B cell (primary cell): ENCODE measurements at regions of chr22 and their contacts with region 1.

Region 1: DNA sequence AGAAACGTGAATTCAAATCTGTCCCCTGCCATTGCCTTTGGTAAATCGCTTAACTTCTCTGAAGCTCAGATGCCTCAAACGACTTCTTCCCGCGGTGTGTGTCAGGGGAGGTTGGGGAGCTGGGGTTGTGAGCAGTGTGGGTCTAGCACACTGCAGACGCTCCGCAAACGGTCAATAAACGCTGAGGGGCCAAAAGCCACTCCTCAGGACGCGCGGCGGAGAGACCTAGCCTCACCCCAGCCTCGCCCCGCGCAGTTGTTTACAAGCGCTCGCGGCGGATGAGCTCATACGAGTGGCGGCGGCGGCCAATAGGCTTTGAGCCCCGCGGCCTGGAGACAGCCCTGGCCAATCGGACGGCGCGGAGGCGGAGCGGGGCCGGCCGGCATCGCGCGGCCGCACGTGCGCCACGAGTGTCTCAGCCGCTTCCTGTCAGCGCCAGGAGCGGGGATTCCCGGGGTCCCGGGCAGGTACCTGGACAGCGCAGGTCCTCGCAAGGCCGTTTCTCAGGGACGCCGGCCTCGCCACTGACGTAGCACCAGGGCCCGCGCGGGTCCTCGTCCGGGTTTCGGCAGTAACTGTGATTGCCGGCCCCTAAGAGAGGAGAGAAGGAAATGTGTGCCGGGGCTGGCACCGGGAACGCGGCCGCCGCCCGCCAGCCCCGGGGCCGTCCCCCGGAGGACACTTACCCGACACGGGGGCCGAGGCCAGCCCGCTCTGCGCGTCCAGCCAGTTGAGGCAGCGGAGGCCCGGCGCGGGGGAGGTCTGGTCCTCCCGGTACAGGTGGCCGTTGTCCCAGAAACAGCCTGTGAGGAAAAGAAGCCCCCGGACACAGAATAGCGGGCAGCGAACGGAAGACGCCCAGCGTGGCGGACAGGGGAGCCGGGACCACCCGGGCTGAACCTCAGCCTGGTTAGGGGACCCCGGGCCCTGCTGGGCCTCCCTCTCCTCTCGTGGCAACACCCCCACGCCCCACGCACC is 1.5 kb downstream of the PIK3IP1 start:
- DNase-seq: peak; percentile 97
- ATAC-seq: peak; percentile 88
- H3K4me3 ChIP-seq: peak overlapping the region; percentile 72 to 99 (median 95)
- H3K4me3 Mint-ChIP-seq: peak overlapping the region; percentile 97
- H3K27ac ChIP-seq: peak overlapping the region; percentile 99 to 100
- H3K27ac Mint-ChIP-seq: peak overlapping the region; percentile 100
- H3K4me1 ChIP-seq: peaks cover 68 to 76% of the 10 kb centered on the region in 2 donors
- H3K4me1 Mint-ChIP-seq: peaks cover 67% of the 10 kb centered on the region
- H3K27me3 ChIP-seq: no peaks in the 10 kb centered on the region
- H3K27me3 Mint-ChIP-seq: no peaks in the 10 kb centered on the region
- CTCF ChIP-seq: no peak

Region 2: GRCh38 chr22:30968924-30969539 is 321.8 kb before region 1 on chr22 and contains the start of gene TUG1:
- CTCF ChIA-PET with region 1: no interaction called
- POLR2A ChIA-PET with region 1: interaction called, 9 read pairs
- intact Hi-C with region 1: loop called (anchors 1 kb)
- DNase-seq: peak; percentile 99
- ATAC-seq: peak; percentile 91
- H3K4me3 ChIP-seq: peak within 1 kb of the TSS; percentile 74 to 88 (median 82)
- H3K4me3 Mint-ChIP-seq: peak within 1 kb of the TSS; percentile 98
- H3K27ac ChIP-seq: peak within 1 kb of the TSS; percentile 90 to 94
- H3K27ac Mint-ChIP-seq: peak within 1 kb of the TSS; percentile 99
- H3K4me1 ChIP-seq: peaks cover 19 to 20% of the 10 kb centered on the region in 2 donors
- H3K4me1 Mint-ChIP-seq: peaks cover 60% of the 10 kb centered on the region
- H3K27me3 ChIP-seq: no peaks in the 10 kb centered on the region
- H3K27me3 Mint-ChIP-seq: no peaks in the 10 kb centered on the region
- CTCF ChIP-seq: no peak
- total RNA-seq, gene TUG1: 110 and 119 TPM in 2 replicates

Region 3: DNA sequence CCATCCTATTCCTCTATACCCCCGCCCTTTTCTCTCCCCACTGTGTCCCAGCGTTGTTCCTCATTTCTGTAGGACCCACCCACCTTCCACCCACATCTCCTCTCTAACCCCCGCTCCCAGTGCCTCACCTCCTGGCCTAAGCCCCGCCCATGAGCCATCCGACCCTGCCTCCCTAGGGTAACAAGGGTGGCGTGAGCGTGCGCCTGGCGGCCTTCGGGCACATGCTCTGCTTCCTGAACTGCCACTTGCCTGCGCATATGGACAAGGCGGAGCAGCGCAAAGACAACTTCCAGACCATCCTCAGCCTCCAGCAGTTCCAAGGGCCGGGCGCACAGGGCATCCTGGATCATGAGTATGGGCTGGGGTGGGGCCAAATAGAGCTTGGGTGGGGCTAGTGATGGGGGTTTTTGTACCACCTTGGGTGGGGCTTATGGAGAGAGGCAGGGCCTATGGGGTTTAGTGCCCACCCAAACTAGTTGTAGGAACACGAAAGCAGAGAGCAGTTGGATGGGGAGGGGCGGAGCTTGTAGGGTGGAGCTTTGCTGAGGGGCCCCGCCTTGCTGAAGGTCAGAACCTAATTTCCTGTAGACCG is 163.5 kb before region 1 on chr22:
- CTCF ChIA-PET with region 1: no interaction called
- POLR2A ChIA-PET with region 1: no interaction called
- intact Hi-C with region 1: no loop called
- DNase-seq: no peak
- ATAC-seq: no peak
- H3K4me3 ChIP-seq: no peak overlapping the region
- H3K4me3 Mint-ChIP-seq: no peak overlapping the region
- H3K27ac ChIP-seq: no peak overlapping the region
- H3K27ac Mint-ChIP-seq: no peak overlapping the region
- H3K4me1 ChIP-seq: peaks cover 5 to 12% of the 10 kb centered on the region in 2 donors
- H3K4me1 Mint-ChIP-seq: peaks cover 6% of the 10 kb centered on the region
- H3K27me3 ChIP-seq: peaks cover 0 to 14% (median 0%) of the 10 kb centered on the region in 4 experiments
- H3K27me3 Mint-ChIP-seq: no peaks in the 10 kb centered on the region
- CTCF ChIP-seq: no peak

Region 4: DNA sequence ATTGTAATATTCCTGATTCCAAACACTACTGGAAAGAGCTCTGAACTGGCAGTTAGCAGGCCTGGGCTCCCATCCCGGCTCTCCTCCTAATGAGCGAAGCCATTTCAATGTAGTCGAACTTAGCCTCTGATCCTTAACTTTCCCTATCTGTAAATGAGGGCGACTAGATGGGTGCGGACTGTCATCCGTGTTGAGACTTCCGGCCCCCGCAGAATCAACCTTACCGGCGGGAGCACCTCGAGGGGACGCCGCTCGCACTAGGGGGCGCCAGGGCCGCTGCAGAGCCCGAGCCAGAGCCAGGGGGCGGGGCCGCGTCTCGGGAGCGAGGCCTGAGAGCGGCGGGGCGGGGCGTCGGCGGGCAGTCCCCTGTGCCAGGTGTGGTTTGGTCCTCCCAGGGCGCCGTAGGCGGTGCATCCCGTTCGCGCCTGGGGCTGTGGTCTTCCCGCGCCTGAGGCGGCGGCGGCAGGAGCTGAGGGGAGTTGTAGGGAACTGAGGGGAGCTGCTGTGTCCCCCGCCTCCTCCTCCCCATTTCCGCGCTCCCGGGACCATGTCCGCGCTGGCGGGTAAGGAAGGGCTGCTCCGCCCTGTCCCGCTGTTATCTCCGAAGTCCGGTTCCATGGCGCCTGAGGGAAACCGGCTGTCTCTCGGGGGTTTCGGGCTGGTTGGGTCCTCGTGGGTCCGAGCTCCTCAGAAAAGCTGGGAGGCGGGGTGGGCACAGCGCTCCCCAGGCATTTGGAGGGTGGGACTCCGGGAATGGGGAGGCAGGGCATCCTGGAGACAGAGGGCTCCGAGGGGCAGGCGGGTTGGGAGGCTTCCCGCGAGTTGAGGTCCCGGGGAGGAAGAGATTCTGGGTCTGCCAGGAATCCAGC is 78.7 kb before region 1 on chr22 and contains the start of gene LIMK2:
- CTCF ChIA-PET with region 1: interaction called, 17 read pairs
- POLR2A ChIA-PET with region 1: no interaction called
- intact Hi-C with region 1: loop called (anchors 1 kb)
- DNase-seq: peak; percentile 96
- ATAC-seq: peak; percentile 100
- H3K4me3 ChIP-seq: peak within 1 kb of the TSS; percentile 76 to 97 (median 80)
- H3K4me3 Mint-ChIP-seq: peak within 1 kb of the TSS; percentile 89
- H3K27ac ChIP-seq: peak within 1 kb of the TSS; percentile 57 to 81
- H3K27ac Mint-ChIP-seq: peak within 1 kb of the TSS; percentile 89
- H3K4me1 ChIP-seq: peaks cover 23 to 29% of the 10 kb centered on the region in 2 donors
- H3K4me1 Mint-ChIP-seq: peaks cover 36% of the 10 kb centered on the region
- H3K27me3 ChIP-seq: no peaks in the 10 kb centered on the region
- H3K27me3 Mint-ChIP-seq: no peaks in the 10 kb centered on the region
- CTCF ChIP-seq: peak; percentile 89
- total RNA-seq, gene LIMK2: 16.3 and 20.2 TPM in 2 replicates

Region 5: GRCh38 chr22:31313366-31314147 is 22.8 kb after region 1 on chr22:
- CTCF ChIA-PET with region 1: interaction called, 208 read pairs
- POLR2A ChIA-PET with region 1: interaction called, 11 read pairs
- intact Hi-C with region 1: loop called (anchors 1 kb)
- DNase-seq: peak; percentile 68
- ATAC-seq: peak; percentile 64
- H3K4me3 ChIP-seq: no peak overlapping the region
- H3K4me3 Mint-ChIP-seq: no peak overlapping the region
- H3K27ac ChIP-seq: no peak overlapping the region
- H3K27ac Mint-ChIP-seq: no peak overlapping the region
- H3K4me1 ChIP-seq: peaks cover 2 to 7% of the 10 kb centered on the region in 2 donors
- H3K4me1 Mint-ChIP-seq: peaks cover 10% of the 10 kb centered on the region
- H3K27me3 ChIP-seq: no peaks in the 10 kb centered on the region
- H3K27me3 Mint-ChIP-seq: no peaks in the 10 kb centered on the region
- CTCF ChIP-seq: peak; percentile 94

Region 6: GRCh38 chr22:31496007-31496734 is 205.4 kb after region 1 on chr22 and contains the start of gene SFI1:
- CTCF ChIA-PET with region 1: no interaction called
- POLR2A ChIA-PET with region 1: interaction called, 4 read pairs
- intact Hi-C with region 1: loop called (anchors 5 kb)
- DNase-seq: peak; percentile 97
- ATAC-seq: peak; percentile 87
- H3K4me3 ChIP-seq: peak within 1 kb of the TSS; percentile 71 to 88 (median 80)
- H3K4me3 Mint-ChIP-seq: peak within 1 kb of the TSS; percentile 97
- H3K27ac ChIP-seq: peak within 1 kb of the TSS; percentile 83 to 85
- H3K27ac Mint-ChIP-seq: peak within 1 kb of the TSS; percentile 97
- H3K4me1 ChIP-seq: peaks cover 25 to 45% of the 10 kb centered on the region in 2 donors
- H3K4me1 Mint-ChIP-seq: peaks cover 39% of the 10 kb centered on the region
- H3K27me3 ChIP-seq: no peaks in the 10 kb centered on the region
- H3K27me3 Mint-ChIP-seq: no peaks in the 10 kb centered on the region
- CTCF ChIP-seq: peak; percentile 34
- total RNA-seq, gene SFI1: 182 and 191 TPM in 2 replicates